HCT116 (cell line): ENCODE measurements at regions of chr1 and their contacts with region 1.

Region 1: GRCh38 chr1:23559136-23559984 is at the start of gene ID3:
- DNase-seq: peak; percentile 86
- ATAC-seq: peak; percentile 58
- H3K4me3 ChIP-seq: peak within 1 kb of the TSS; percentile 79 to 95
- H3K27ac ChIP-seq: peak within 1 kb of the TSS; percentile 89
- H3K4me1 ChIP-seq: peaks cover 69 to 90% of the 10 kb centered on the region in 2 experiments
- H3K27me3 ChIP-seq: no peaks in the 10 kb centered on the region
- CTCF ChIP-seq: no peak
- POLR2A ChIP-seq: peak; percentile 99
- RAD21 ChIP-seq: no peak
- total RNA-seq, gene ID3: 183 TPM

Region 2: DNA sequence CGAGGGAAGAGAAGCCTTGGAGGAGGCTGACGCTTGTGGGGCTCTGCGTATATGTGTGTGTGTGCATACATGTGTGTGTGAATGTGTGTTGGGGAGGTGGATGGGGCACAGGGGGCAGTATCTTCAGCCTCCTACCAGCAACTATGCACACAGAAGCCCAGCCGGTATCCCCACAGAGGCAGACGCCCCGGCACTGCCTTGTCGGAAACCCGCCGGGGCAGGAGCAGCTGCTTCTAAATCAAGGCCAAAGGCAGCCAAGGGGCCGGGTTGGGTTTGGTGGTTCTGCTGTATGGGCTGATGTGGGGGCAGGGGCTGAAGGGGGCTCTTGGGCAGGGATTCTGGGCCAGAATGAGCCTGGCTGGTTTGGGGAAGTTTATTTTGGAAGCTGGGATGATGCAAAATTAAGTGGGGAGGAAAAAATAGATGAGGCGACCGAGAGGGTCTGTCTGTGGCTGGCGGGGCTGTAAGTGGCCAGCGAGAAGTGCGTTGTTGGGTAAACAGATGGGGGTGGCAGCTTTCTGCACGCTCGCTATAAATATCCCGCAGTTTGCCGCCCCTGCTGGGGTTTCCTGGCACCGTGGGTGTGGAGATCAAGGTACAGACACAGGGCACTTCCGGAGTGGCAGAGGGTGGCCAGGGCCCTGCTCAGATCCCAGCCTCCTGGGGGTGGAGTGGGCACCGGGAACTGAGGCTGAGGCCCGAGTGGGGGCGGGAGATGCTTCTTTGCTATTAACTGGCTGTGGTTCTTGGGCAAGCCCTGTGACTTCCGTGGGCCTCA is 1405.5 kb before region 1 on chr1:
- CTCF ChIA-PET with region 1: no interaction called
- POLR2A ChIA-PET with region 1: no interaction called
- RAD21 ChIA-PET with region 1: no interaction called
- intact Hi-C with region 1: no loop called
- DNase-seq: no peak
- ATAC-seq: no peak
- H3K4me3 ChIP-seq: no peak overlapping the region
- H3K27ac ChIP-seq: no peak overlapping the region
- H3K4me1 ChIP-seq: no peaks in the 10 kb centered on the region
- H3K27me3 ChIP-seq: no peaks in the 10 kb centered on the region
- CTCF ChIP-seq: no peak
- POLR2A ChIP-seq: no peak
- RAD21 ChIP-seq: no peak

Region 3: GRCh38 chr1:23548704-23549143 is 10.6 kb before region 1 on chr1:
- CTCF ChIA-PET with region 1: interaction called, 3 read pairs
- POLR2A ChIA-PET with region 1: interaction called, 15 read pairs
- RAD21 ChIA-PET with region 1: no interaction called
- intact Hi-C with region 1: no loop called
- DNase-seq: no peak
- ATAC-seq: no peak
- H3K4me3 ChIP-seq: no peak overlapping the region
- H3K27ac ChIP-seq: no peak overlapping the region
- H3K4me1 ChIP-seq: peaks cover 19 to 32% of the 10 kb centered on the region in 2 experiments
- H3K27me3 ChIP-seq: no peaks in the 10 kb centered on the region
- CTCF ChIP-seq: no peak
- POLR2A ChIP-seq: no peak
- RAD21 ChIP-seq: no peak

Region 4: GRCh38 chr1:23657659-23658275 is 98.4 kb after region 1 on chr1:
- CTCF ChIA-PET with region 1: interaction called, 15 read pairs
- POLR2A ChIA-PET with region 1: no interaction called
- RAD21 ChIA-PET with region 1: no interaction called
- intact Hi-C with region 1: no loop called
- DNase-seq: peak; percentile 60
- ATAC-seq: peak; percentile 98
- H3K4me3 ChIP-seq: no peak overlapping the region
- H3K27ac ChIP-seq: no peak overlapping the region
- H3K4me1 ChIP-seq: peaks cover 0 to 12% of the 10 kb centered on the region in 2 experiments; a peak in 2 of 4 replicates
- H3K27me3 ChIP-seq: no peaks in the 10 kb centered on the region
- CTCF ChIP-seq: peak; percentile 57 to 100 (median 98); a peak in 5 of 6 replicates
- POLR2A ChIP-seq: no peak
- RAD21 ChIP-seq: peak; percentile 53